Ascending aorta (tissue), 2 donors: ENCODE measurements at regions of chr12 and their contacts with region 1.

Region 1: DNA sequence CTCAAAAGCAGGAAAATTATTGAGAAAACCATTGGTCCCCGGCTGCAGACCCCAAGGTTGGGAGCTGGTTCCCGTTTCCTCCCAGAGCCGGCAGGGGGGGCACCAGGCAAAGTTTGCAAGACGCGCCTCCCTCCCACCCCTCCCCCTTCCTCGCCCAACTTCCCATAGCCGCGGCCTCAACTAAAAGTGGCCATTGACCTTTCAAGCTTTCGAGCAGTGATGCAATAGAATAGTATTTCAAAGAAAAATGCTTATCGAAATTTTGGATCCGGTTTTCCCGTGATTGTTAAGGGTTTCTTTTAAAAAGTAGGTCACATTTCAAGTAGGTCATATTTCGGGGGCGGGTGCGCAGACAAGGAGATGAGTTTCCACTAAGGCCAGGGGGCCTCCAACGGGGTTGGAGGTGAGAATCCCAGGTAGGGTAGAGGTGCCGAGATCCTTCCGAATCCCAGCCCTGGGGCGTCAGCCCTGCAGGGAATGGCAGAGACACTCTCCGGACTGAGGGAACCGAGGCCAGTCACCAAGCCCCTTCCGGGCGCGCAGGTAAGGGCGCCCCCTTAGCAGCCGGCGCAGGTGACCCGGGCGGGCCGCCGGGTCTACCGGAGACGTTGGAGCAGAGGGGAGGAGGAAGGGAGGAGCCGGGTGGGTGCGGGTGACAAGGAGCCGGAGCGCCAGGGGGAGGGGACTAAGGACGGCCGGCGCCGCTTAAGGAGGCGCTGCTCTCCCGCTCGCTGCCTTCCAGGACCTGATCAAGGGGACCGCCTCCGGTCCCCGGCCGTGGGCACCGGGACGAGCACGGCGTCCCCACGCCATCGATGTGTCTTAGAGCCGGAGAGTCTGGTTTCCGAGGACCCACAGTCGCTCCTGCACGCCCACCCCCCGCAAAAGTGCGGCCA is 2.6 kb upstream of the SOCS2 start:
- DNase-seq: peak; percentile 35 to 91
- H3K4me3 ChIP-seq: peak overlapping the region; percentile 88 to 90
- H3K27ac ChIP-seq: peak overlapping the region; percentile 92 to 93
- H3K4me1 ChIP-seq: no peaks in the 10 kb centered on the region
- H3K27me3 ChIP-seq: no peaks in the 10 kb centered on the region
- CTCF ChIP-seq: peak; percentile 77 to 90 (median 79)

Region 2: DNA sequence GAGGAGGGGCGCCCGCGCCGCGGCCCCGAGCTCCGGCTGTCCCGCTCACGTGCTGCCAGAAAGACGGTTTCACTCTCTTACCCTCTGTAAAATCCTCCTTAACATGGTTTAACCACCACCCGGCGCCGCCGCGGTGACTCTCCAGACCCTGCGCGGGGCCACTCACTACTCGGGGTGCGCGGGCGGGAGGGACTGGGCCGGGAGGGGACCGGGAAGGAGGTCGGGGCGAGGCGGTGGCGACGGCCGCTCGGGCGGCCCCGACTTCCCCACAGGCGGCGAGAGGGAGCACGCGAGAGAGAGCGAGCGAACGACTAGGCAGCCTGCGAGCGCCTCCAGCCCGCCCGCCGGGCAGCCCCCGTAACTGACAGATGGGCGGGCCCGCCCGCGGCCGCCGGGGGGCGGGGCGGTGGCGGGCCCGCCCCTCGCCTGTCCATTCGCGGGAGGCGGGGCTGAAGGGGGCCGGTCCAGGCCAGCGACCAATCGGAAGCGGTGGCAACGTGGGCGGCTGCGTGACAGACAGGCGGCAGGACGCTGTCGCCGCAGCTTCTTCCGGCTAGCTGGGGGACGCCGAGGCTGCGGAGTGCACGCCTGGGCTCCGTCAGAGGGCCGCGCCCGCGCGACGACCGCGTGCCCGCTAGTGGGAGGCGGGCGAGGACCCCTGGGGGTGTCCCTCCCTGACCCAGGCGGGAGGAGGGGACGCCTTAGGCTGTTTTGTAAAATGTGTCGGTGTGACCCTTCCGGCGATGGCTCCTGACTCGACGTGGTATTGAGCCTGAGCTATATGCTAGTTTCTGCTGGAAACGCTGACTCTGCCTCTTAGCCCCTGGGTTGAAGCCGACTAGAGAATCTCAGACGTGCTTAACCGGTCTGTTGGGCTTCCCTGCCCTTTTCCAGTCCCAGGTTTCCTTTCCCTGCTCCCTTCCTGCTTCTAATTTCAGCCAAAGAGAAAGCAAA is 640.7 kb before region 1 on chr12 and contains the start of gene EEA1:
- intact Hi-C with region 1: loop called (anchors 5 kb)
- DNase-seq: peak; percentile 82 to 97
- H3K4me3 ChIP-seq: peak within 1 kb of the TSS; percentile 69 to 100
- H3K27ac ChIP-seq: peak within 1 kb of the TSS; percentile 98 to 99
- H3K4me1 ChIP-seq: peaks cover 5 to 13% of the 10 kb centered on the region in 2 donors
- H3K27me3 ChIP-seq: no peaks in the 10 kb centered on the region
- CTCF ChIP-seq: peak; percentile 11 to 36 (median 30)
- total RNA-seq, gene EEA1: 10.9 TPM

Region 3: GRCh38 chr12:93526786-93527428 is 43.0 kb before region 1 on chr12:
- intact Hi-C with region 1: no loop called
- DNase-seq: no peak
- H3K4me3 ChIP-seq: no peak overlapping the region
- H3K27ac ChIP-seq: no peak overlapping the region
- H3K4me1 ChIP-seq: no peaks in the 10 kb centered on the region
- H3K27me3 ChIP-seq: no peaks in the 10 kb centered on the region
- CTCF ChIP-seq: no peak

Region 4: GRCh38 chr12:93541578-93542225 is 28.2 kb before region 1 on chr12:
- intact Hi-C with region 1: no loop called
- DNase-seq: no peak
- H3K4me3 ChIP-seq: no peak overlapping the region
- H3K27ac ChIP-seq: no peak overlapping the region
- H3K4me1 ChIP-seq: no peaks in the 10 kb centered on the region
- H3K27me3 ChIP-seq: no peaks in the 10 kb centered on the region
- CTCF ChIP-seq: no peak

Region 5: DNA sequence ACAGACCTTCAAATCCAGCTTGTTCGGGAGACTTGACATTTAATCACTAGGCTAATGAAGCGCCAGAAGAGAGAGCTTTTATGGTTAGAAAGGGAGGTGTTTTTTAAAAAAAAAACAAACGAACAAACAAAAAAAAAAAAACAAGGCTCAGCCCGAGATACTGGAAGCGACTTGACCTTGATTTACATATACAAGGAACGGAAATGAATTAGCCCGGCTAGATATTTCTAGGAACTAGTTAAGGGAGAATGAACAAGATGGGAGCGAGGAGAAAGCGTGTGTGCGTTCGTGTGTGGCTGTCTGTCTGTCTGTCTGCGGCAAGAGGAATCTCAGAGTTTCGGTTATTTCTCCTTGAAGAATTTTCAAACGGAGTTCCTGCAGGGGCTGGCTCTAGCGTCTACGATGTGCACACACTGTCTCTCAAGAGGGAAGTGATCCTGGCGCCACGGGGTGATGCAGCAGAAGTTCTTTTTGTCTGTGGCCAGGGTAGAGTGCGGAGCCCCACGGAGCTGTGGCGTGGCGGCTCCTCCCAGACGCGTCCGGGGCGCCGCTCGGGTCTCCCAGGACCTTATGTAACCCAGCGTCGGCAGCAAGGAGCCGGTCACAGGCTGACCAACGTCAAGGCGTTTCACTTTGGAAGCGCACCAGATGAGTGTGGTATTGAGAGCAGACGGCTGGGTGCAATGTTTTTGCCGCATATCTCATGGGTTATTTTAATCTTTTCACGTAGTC is 21.4 kb after region 1 on chr12:
- intact Hi-C with region 1: loop called (anchors 2 kb)
- DNase-seq: peak; percentile 62 to 91
- H3K4me3 ChIP-seq: peak overlapping the region; percentile 60 to 68
- H3K27ac ChIP-seq: peak overlapping the region; percentile 56 to 62
- H3K4me1 ChIP-seq: peaks cover 0 to 4% of the 10 kb centered on the region in 2 donors
- H3K27me3 ChIP-seq: no peaks in the 10 kb centered on the region
- CTCF ChIP-seq: no peak

Region 6: GRCh38 chr12:93742110-93742934 is 172.4 kb after region 1 on chr12:
- intact Hi-C with region 1: loop called (anchors 1 kb)
- DNase-seq: peak in 1 of 2 donors; percentile 90
- H3K4me3 ChIP-seq: peak overlapping the region; percentile 61 to 76
- H3K27ac ChIP-seq: peak overlapping the region; percentile 90 to 93
- H3K4me1 ChIP-seq: peaks cover 2 to 18% of the 10 kb centered on the region in 2 donors
- H3K27me3 ChIP-seq: no peaks in the 10 kb centered on the region
- CTCF ChIP-seq: peak; percentile 17 to 62 (median 39)

Region 7: DNA sequence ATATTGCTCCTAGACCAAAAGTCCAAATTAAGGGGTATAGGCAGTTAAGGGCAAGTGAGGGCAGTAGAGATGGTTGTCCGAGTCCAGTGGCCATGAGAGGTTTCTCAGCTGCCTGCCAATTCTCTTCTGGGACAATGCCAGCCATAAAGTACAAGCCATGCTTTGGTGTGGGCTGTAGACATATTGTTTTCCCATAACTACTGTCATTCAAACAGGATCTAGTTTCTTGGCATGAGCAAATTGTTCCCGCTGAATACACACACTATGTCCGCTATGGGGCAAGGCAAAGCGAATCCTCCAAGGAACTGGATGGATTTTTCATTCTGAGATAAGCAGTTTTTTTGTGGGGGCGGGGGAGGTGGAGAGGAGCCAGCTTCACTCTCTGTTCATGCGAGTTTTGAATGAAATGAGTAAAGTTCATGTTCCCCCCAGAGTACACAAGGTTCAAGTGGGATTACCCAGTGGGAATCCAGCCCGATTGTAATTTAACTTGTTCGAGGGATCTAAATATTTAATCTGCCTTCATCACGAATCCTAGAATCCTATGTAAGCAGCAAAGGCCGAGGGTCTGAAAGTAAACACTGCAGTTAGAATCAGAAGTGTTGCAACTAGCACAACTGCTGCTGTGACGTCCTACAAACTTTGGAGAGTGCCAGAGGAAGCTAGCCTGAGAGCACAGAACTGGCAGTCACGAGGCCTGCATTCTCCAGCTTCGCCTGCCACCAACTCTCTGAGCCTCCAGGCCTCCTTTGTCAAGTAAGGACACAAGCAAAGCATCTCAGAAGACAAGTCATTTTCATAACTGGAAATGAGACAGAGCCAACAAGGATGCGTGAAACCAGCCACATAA is 244.3 kb after region 1 on chr12:
- intact Hi-C with region 1: loop called (anchors 5 kb)
- DNase-seq: peak; percentile 21 to 92
- H3K4me3 ChIP-seq: peak overlapping the region; percentile 24 to 43
- H3K27ac ChIP-seq: peak overlapping the region; percentile 85 to 98
- H3K4me1 ChIP-seq: peaks cover 4 to 39% of the 10 kb centered on the region in 2 donors
- H3K27me3 ChIP-seq: no peaks in the 10 kb centered on the region
- CTCF ChIP-seq: no peak

Region 8: DNA sequence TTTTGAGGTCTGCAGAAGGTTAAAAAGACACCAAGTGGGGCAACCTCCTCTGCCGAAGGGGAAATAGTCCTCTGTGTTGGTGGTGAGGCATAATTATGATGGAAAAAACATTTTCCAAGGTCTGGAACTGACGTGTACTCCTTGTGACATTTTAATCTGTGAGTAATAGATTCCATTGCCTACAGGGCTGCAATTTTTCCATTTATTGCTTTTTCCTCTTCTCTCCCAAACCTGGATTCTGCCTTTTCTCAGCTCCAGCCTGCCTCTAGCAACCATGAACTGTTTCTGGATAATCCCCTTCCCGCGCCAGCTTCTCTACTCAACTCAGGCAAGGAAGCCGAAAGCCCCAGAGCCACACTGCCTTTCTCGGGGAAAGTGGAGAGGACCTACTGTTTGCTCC is 348.4 kb after region 1 on chr12:
- intact Hi-C with region 1: loop called (anchors 5 kb)
- DNase-seq: peak in 1 of 2 donors; percentile 74
- H3K4me3 ChIP-seq: no peak overlapping the region
- H3K27ac ChIP-seq: peak overlapping the region; percentile 91 to 94
- H3K4me1 ChIP-seq: peaks cover 4 to 26% of the 10 kb centered on the region in 2 donors
- H3K27me3 ChIP-seq: no peaks in the 10 kb centered on the region
- CTCF ChIP-seq: no peak

Region 9: GRCh38 chr12:94101738-94102660 is 532.1 kb after region 1 on chr12:
- intact Hi-C with region 1: loop called (anchors 1 kb)
- DNase-seq: peak; percentile 39 to 94
- H3K4me3 ChIP-seq: peak overlapping the region; percentile 63 to 67
- H3K27ac ChIP-seq: peak overlapping the region; percentile 1 to 47
- H3K4me1 ChIP-seq: peaks cover 0 to 4% of the 10 kb centered on the region in 2 donors
- H3K27me3 ChIP-seq: no peaks in the 10 kb centered on the region
- CTCF ChIP-seq: peak; percentile 71 to 87 (median 71)